Dendritic cell treated with granulocyte-macrophage colony-stimulating factor and Interleukin-4, amounts not matched to agents 40 ng/mL and 50 ng/mL, for 4 days (primary cell): ENCODE measurements at regions of chr16 and their contacts with region 1.

Region 1: GRCh38 chr16:2155091-2156021 is at the start of gene TRAF7:
- H3K4me3 Mint-ChIP-seq: peak within 1 kb of the TSS; percentile 99
- H3K27ac Mint-ChIP-seq: peak within 1 kb of the TSS; percentile 95
- H3K4me1 Mint-ChIP-seq: peaks cover 76% of the 10 kb centered on the region
- H3K27me3 Mint-ChIP-seq: peaks cover 19% of the 10 kb centered on the region

Region 2: GRCh38 chr16:2003827-2004641 is 151.3 kb before region 1 on chr16:
- intact Hi-C with region 1: loop called (anchors 1 kb)
- H3K4me3 Mint-ChIP-seq: peak overlapping the region; percentile 5
- H3K27ac Mint-ChIP-seq: peak overlapping the region; percentile 40
- H3K4me1 Mint-ChIP-seq: peaks cover 63% of the 10 kb centered on the region
- H3K27me3 Mint-ChIP-seq: peaks cover 2% of the 10 kb centered on the region

Region 3: DNA sequence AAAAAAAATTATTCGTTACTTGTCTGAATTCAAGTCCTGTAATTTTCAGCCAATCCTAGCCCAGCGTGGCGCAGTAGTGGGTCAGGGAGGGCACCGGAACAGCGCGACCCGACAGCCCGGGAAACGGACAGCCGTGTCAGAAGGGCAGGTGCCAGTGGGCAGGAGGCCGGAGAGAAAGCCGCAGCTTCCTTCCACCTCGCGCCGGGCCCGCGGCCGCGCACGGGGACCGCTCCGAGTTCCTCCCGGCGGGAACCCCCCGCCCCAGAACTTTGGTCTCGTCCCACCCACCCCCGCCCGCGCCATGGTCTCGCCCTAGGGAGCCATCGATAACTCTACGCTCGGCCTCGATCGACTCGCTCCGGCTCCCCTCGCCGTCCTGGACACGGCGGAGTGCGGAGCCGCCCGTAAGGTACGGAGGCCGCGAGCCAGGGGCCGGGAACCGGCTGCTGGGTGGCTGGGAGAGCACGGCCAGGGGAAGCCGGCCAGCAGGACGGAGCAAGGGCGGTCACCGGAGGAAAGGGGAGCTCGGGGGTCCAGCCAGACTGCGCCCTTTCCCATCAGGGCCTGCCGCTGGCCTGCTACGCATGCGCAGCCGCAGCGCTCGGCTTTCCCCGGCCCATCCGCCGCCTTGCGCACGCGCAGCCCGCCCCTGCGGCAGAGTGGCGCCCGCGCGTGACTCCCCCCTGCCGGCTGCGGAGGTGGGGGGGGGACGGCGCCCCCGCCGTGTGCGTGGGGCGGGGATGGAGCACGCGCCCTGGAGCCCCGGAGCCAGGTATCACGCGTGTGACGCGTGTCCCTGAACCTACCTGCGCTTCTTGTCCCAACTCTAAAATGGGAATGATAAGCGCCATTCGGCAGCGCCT is 50.0 kb after region 1 on chr16 and contains the start of gene MLST8:
- intact Hi-C with region 1: loop called (anchors 1 kb)
- H3K4me3 Mint-ChIP-seq: peak within 1 kb of the TSS; percentile 85
- H3K27ac Mint-ChIP-seq: peak within 1 kb of the TSS; percentile 86
- H3K4me1 Mint-ChIP-seq: peaks cover 47% of the 10 kb centered on the region
- H3K27me3 Mint-ChIP-seq: peaks cover 21% of the 10 kb centered on the region

Region 4: DNA sequence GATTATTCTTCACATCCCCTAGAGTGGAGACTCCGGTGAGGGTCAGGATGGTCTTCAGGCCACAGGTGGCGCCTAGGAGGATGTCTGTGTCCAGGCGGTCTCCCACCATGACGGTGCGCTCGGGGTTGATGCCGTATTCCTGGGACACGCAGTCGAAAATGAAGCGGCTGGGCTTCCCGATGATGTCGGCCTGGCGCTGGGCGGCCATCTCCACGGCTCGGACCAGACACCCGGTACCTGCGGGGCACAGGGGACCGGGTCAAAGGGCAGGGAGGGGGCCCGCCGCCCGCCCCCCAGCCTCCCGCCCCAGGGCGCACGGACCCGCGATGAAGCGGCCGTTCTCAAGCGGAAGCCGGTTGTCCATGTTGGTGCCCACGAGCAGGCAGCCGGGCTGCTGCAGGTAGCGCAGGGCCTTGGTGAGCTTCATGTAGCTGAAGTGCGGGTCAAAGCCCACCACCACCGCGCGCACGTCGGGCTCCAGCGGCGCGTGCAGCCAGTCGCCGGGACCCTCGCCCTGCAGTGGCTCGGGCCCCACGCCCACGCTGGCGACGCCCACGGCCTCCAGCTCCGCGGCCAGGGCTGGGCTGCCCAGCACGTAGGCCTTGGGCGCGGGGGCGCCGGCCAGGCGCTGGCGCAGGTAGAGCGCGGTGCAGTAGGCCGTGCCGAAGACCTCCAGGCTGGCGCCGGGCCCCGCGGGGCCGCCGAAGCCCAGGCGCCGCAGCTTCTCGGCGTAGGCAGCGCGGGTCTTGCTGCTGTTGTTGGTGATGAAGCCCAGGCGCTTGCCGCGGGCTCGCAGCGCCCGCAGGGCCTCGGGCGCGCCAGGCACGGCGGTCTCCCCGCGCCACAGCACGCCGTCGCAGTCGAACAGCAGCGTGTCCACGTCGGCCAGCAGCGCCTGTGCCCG is 58.7 kb after region 1 on chr16:
- intact Hi-C with region 1: loop called (anchors 2 kb)
- H3K4me3 Mint-ChIP-seq: peak overlapping the region; percentile 78
- H3K27ac Mint-ChIP-seq: peak overlapping the region; percentile 82
- H3K4me1 Mint-ChIP-seq: peaks cover 36% of the 10 kb centered on the region
- H3K27me3 Mint-ChIP-seq: no peaks in the 10 kb centered on the region